IMR-90 (cell line): ENCODE measurements at regions of chr9 and their contacts with region 1.

Region 1: GRCh38 chr9:104927912-104928740 is at the start of gene ABCA1:
- DNase-seq: peak; percentile 83
- ATAC-seq: peak; percentile 75
- H3K4me3 ChIP-seq: peak within 1 kb of the TSS; percentile 99
- H3K27ac ChIP-seq: peak within 1 kb of the TSS; percentile 94
- H3K4me1 ChIP-seq: peaks cover 9% of the 10 kb centered on the region
- H3K27me3 ChIP-seq: no peaks in the 10 kb centered on the region
- CTCF ChIP-seq: no peak
- POLR2A ChIP-seq: peak; percentile 89
- RAD21 ChIP-seq: no peak
- total RNA-seq, gene ABCA1: 43.6 and 52.2 TPM in 2 replicates

Region 2: GRCh38 chr9:104738452-104738851 is 189.7 kb before region 1 on chr9:
- CTCF ChIA-PET with region 1: no interaction called
- POLR2A ChIA-PET with region 1: no interaction called
- dilution Hi-C with region 1: no loop called
- in situ Hi-C with region 1: no loop called
- intact Hi-C with region 1: no loop called
- DNase-seq: no peak
- ATAC-seq: no peak
- H3K4me3 ChIP-seq: no peak overlapping the region
- H3K27ac ChIP-seq: no peak overlapping the region
- H3K4me1 ChIP-seq: no peaks in the 10 kb centered on the region
- H3K27me3 ChIP-seq: no peaks in the 10 kb centered on the region
- CTCF ChIP-seq: no peak
- POLR2A ChIP-seq: no peak
- RAD21 ChIP-seq: no peak

Region 3: DNA sequence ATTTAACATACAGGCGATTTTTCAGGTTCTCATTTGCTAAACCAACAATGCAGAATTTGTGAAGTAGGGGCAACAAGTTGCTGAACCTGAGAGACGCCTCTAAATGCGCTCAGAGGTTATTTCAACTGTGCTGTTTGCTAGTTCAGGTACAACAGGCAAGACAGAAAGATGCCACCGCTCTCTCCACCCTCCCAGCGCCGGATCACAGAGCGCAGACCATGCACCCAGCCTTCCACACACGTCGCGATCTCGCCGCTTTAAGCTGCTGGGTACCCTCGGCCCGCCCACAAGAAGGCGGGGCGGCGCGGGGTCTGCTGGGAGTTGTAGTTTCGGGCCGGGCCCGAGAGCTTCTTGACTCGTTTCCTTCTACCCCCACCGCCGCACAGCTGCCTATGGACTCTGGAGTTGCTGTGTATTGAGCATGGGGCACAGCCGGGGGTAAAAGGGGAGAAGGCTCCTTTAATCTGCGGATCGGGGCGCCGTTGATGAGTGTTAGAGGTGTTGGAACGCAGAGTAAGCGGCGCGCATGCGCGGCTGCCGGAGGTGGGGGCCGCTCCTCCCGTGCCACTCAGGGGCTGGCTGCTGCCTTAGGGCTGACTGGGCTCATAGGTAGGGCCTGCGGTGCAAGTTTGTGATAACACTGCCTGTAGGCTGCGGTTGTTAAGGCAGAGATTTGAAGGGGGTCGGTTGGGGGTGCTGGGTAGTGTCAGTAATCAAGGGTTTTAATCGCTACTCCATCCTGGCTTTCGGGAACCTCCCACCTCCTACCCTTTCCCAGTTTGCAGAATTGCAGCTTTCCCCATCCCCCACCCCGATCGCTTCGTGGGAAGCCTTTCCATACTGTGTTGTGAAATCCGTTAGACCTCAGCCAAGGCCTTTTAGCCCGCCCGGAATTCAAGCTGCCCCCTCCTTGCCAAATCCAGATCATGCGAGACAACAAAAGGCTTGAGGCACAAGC is 40.2 kb after region 1 on chr9:
- CTCF ChIA-PET with region 1: interaction called, 9 read pairs
- POLR2A ChIA-PET with region 1: interaction called, 7 read pairs
- dilution Hi-C with region 1: no loop called
- in situ Hi-C with region 1: no loop called
- intact Hi-C with region 1: loop called (anchors 1 kb)
- DNase-seq: peak; percentile 90
- ATAC-seq: peak; percentile 94
- H3K4me3 ChIP-seq: peak overlapping the region; percentile 59
- H3K27ac ChIP-seq: peak overlapping the region; percentile 98
- H3K4me1 ChIP-seq: peaks cover 11% of the 10 kb centered on the region
- H3K27me3 ChIP-seq: no peaks in the 10 kb centered on the region
- CTCF ChIP-seq: no peak
- POLR2A ChIP-seq: no peak
- RAD21 ChIP-seq: 0 out of 2 replicates have a peak, but pooled peaks have one; percentile 1

Region 4: DNA sequence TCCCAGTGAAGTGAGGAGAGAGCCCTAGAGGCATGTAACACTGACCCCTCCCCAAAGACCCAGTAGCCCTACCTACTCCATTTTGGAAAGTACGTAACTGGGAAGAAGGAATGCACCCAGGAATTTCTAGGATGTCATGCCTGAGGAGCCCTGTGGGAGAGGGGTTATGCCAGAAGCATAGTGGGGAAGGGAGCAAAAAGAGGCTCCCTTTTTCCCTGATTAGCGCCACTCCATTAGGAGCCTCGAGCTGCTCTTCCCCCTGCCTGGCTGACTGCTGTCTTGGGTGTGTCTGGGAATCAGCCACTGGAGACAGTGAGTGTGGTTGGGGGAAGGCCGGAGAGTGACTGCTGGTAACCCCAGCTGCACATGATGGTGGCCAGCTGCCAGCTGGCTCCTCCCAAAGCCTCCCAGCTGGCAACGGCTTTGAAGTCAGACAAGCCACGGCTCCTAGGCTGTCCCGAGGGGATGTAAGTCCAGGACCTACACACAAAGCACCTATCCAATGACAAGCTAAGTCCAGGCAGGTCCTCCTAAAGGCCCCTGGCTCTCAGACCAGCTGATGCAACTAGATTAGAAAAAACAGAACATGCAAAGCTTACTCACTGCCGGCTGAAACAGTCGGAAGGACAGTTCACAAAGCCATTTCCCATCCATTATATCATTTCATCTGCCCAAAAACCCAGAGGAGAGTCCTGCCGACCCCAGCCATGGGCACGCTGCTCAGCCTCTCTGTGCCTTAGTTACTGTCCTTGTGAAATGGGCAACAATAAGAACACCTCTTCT is 136.4 kb after region 1 on chr9:
- CTCF ChIA-PET with region 1: interaction called, 8 read pairs
- POLR2A ChIA-PET with region 1: interaction called, 3 read pairs
- dilution Hi-C with region 1: no loop called
- in situ Hi-C with region 1: no loop called
- intact Hi-C with region 1: loop called (anchors 2 kb)
- DNase-seq: peak; percentile 97
- ATAC-seq: peak; percentile 86
- H3K4me3 ChIP-seq: no peak overlapping the region
- H3K27ac ChIP-seq: peak overlapping the region; percentile 97
- H3K4me1 ChIP-seq: peaks cover 21% of the 10 kb centered on the region
- H3K27me3 ChIP-seq: no peaks in the 10 kb centered on the region
- CTCF ChIP-seq: no peak
- POLR2A ChIP-seq: peak; percentile 22
- RAD21 ChIP-seq: peak; percentile 25

Region 5: GRCh38 chr9:105157130-105157583 is 229.0 kb after region 1 on chr9:
- CTCF ChIA-PET with region 1: no interaction called
- POLR2A ChIA-PET with region 1: no interaction called
- dilution Hi-C with region 1: no loop called
- in situ Hi-C with region 1: loop called (anchors 5 kb)
- intact Hi-C with region 1: loop called (anchors 1 kb)
- DNase-seq: peak; percentile 77
- ATAC-seq: peak; percentile 93
- H3K4me3 ChIP-seq: no peak overlapping the region
- H3K27ac ChIP-seq: peak overlapping the region; percentile 13; the same call in 1 of the 2 replicates
- H3K4me1 ChIP-seq: peaks cover 7% of the 10 kb centered on the region
- H3K27me3 ChIP-seq: no peaks in the 10 kb centered on the region
- CTCF ChIP-seq: peak; percentile 59
- POLR2A ChIP-seq: no peak
- RAD21 ChIP-seq: peak; percentile 69

Region 6: DNA sequence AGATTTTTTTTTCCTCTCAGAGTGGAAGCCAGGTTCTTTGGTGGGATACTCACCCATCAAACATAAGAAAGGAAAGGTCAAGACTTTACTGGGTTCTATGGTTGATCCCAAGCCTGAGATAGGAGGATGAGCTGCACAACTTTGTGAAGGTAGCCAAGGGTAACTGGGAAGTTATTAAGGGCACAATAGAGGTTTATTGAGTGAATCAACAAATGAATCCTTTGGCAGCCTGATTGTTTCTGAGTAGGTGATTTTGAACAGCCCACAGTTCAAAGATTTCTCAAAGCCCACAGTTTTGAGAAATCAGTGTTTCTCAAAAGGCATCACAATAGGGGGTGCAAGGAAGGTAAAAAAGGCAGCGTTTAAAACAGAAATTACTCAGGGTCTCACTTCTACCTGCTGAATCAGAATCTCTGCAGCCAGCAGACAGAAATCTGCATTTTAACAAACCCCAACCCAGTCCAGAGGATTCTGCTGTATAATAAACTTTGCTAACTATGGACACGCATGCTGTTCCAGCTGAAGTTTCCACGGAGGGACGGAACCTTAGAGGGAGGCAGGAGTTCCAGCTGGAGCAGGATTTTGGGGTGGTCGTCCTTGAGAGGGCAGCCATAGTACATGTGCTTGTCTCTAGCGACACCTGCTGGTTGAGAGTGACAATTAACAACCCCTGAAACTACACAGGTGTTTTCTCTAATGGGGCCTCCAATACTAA is 487.0 kb after region 1 on chr9:
- CTCF ChIA-PET with region 1: interaction called, 4 read pairs
- POLR2A ChIA-PET with region 1: no interaction called
- dilution Hi-C with region 1: no loop called
- in situ Hi-C with region 1: loop called (anchors 5 kb)
- intact Hi-C with region 1: loop called (anchors 1 kb)
- DNase-seq: peak; percentile 55
- ATAC-seq: peak; percentile 70
- H3K4me3 ChIP-seq: no peak overlapping the region
- H3K27ac ChIP-seq: no peak overlapping the region
- H3K4me1 ChIP-seq: peaks cover 6% of the 10 kb centered on the region
- H3K27me3 ChIP-seq: no peaks in the 10 kb centered on the region
- CTCF ChIP-seq: peak; percentile 77
- POLR2A ChIP-seq: no peak
- RAD21 ChIP-seq: peak; percentile 97